H1 (cell line): ENCODE measurements at regions of chr17 and their contacts with region 1.

Region 1: DNA sequence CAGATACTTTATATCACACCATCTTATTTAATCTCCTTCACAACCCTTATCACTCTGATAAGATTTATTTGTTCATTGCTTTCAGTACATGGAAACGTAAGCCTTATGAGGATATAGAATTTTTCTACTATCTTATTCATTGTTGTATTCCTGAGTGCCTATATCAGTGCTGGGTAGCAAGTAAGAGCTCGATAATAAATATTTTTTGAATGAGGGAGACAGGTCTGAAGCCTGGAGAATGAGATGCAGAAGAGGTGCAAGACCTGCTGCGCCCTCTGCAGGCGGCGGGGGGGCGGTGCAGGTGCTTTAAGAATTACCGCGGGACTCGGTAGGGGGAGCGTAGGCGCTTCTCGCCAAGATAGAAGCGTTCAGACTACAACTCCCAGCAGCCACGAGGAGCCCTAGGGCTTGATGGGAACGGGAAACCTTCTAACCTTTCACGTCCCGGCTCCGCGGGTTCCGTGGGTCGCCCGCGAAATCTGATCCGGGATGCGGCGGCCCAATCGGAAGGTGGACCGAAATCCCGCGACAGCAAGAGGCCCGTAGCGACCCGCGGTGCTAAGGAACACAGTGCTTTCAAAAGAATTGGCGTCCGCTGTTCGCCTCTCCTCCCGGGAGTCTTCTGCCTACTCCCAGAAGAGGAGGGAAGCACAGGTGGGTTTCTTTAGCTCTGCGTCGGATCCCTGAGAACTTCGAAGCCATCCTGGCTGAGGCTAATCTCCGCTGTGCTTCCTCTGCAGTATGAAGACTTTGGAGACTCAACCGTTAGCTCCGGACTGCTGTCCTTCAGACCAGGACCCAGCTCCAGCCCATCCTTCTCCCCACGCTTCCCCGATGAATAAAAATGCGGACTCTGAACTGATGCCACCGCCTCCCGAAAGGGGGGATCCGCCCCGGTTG is at the start of gene WRAP53:
- DNase-seq: peak; percentile 95 to 99
- H3K4me3 ChIP-seq: peak within 1 kb of the TSS; percentile 75 to 100 (median 94)
- H3K27ac ChIP-seq: peak within 1 kb of the TSS; percentile 99
- H3K4me1 ChIP-seq: peaks cover 0 to 11% (median 4%) of the 10 kb centered on the region in 4 experiments; a peak in 4 of 7 replicates
- H3K27me3 ChIP-seq: no peaks in the 10 kb centered on the region
- CTCF ChIP-seq: peak; percentile 91 to 99 (median 93)
- EP300 ChIP-seq: no peak
- POLR2A ChIP-seq: peak in 1 of 2 experiments; percentile 77; a peak in 2 of 3 replicates
- RAD21 ChIP-seq: peak; percentile 83 to 85
- total RNA-seq, gene WRAP53: 29.3 and 30.1 TPM in 2 replicates

Region 2: GRCh38 chr17:7572588-7573323 is 115.4 kb before region 1 on chr17:
- CTCF ChIA-PET with region 1: no interaction called
- POLR2A ChIA-PET with region 1: interaction called, 105 read pairs
- DNase-seq: peak; percentile 100
- H3K4me3 ChIP-seq: peak overlapping the region; percentile 97 to 99 (median 98)
- H3K27ac ChIP-seq: peak overlapping the region; percentile 99
- H3K4me1 ChIP-seq: peaks cover 4 to 10% (median 7%) of the 10 kb centered on the region in 4 experiments
- H3K27me3 ChIP-seq: no peaks in the 10 kb centered on the region
- CTCF ChIP-seq: no peak
- EP300 ChIP-seq: no peak
- POLR2A ChIP-seq: peak; percentile 96 to 98
- RAD21 ChIP-seq: no peak

Region 3: DNA sequence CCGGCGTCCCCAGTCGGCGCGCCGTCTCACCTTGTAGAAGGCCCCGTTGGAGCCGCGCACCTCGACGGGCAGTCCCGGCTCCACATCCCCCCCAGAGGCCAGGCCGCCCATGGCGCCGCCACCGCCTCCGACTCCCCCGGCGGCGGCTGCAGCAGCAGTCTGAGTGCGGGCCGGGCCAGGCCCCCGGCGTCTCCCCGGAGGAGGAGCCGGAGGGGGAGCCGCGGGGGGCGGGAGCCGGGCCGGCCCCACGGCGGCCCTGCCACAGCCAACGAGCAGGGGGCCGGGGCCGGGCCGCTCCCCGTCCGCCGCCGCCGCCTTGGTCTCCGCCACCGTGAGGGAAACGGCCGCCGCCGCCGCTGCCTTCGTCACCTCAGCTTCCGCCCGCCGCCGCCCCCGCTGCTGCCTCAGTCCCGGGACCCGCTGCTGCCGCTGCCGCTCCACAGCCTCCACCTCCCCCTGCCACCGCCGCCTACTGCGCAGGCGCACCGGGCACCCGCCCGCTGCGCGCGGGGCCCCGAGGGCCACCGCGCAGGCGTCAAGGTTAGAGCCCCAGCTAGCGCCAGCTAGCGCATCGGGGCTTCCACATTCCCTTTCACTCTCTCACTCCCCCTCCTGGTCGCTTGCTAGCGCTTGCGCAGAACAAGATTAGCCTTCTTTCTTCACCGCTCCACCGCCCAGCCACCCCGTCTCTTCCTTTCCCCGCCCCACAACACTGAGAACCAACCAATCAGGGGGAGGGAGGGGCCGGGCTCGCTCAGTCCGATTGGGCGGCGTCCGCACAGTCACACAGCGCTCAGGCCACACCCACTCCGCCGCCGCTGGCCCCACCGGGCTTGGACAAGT is 73.5 kb before region 1 on chr17 and contains the start of gene FXR2:
- CTCF ChIA-PET with region 1: interaction called, 15 read pairs
- POLR2A ChIA-PET with region 1: interaction called, 2,272 read pairs
- DNase-seq: peak; percentile 97 to 100
- H3K4me3 ChIP-seq: peak within 1 kb of the TSS; percentile 87 to 95 (median 92)
- H3K27ac ChIP-seq: peak within 1 kb of the TSS; percentile 52; the same call in 1 of the 2 replicates
- H3K4me1 ChIP-seq: peaks cover 0 to 5% (median 1%) of the 10 kb centered on the region in 4 experiments; a peak in 4 of 7 replicates
- H3K27me3 ChIP-seq: no peaks in the 10 kb centered on the region
- CTCF ChIP-seq: peak; percentile 62 to 76 (median 64)
- EP300 ChIP-seq: no peak
- POLR2A ChIP-seq: peak in 1 of 2 experiments; percentile 24; a peak in 1 of 3 replicates
- RAD21 ChIP-seq: peak; percentile 14 to 29
- total RNA-seq, gene FXR2: 26.2 and 26.8 TPM in 2 replicates

Region 4: GRCh38 chr17:7650509-7651096 is 37.6 kb before region 1 on chr17 and contains the start of gene ATP1B2:
- CTCF ChIA-PET with region 1: interaction called, 34 read pairs
- POLR2A ChIA-PET with region 1: interaction called, 2,272 read pairs
- DNase-seq: peak; percentile 72 to 90
- H3K4me3 ChIP-seq: peak within 1 kb of the TSS; percentile 43 to 87 (median 63)
- H3K27ac ChIP-seq: no peak within 1 kb of the TSS
- H3K4me1 ChIP-seq: peaks cover 0 to 12% (median 8%) of the 10 kb centered on the region in 4 experiments; a peak in 5 of 7 replicates
- H3K27me3 ChIP-seq: peaks cover 0 to 13% (median 4%) of the 10 kb centered on the region in 4 experiments; a peak in 4 of 7 replicates
- CTCF ChIP-seq: no peak
- EP300 ChIP-seq: no peak
- POLR2A ChIP-seq: peak in 1 of 2 experiments; percentile 81; a peak in 2 of 3 replicates
- RAD21 ChIP-seq: no peak
- total RNA-seq, gene ATP1B2: 19.8 and 21.0 TPM in 2 replicates

Region 5: DNA sequence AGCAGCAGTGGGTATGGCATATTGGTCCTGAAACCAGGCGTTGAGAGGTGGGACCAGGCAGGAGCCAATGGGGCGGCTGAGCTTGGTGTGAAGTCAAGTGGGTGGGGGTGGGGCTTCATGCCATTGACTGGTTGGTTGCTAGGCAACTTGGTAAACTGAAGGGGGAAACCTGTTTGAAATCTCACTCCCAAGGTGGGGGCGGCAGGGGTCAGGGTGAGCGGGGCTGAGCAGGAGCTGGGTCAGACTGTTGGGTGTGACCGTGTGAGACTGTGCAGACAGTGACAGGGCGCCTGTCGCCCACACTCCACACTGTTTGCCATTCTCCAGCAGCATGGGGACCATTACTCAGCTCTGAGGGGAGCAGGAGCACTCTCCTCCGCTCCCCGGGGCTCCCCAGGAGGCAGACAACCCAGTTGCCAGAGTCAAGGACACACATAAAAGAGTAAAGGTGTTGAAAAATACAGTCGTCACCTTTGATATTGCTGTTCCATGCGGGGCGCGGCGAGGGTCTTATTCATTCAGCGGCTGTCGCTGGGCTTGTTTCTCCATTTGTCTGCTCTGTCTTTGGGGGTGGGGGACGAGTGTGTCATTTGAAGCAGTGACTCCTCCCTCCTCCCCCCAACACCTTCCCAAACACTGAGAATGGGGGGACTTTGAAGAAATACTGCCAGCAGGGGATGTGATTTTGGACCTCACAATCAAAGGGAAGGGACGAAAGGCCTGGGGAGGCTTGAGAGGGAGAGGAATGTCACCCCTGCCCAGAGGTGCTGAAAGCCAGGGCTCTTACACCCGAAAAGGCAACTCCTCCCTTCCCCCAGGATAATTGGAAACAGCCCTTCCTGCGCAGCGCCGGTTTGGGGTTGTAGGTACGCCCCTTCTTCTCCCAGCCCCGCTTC is 15.7 kb after region 1 on chr17:
- CTCF ChIA-PET with region 1: interaction called, 86 read pairs
- POLR2A ChIA-PET with region 1: interaction called, 186 read pairs
- DNase-seq: peak; percentile 61 to 77
- H3K4me3 ChIP-seq: peak overlapping the region; percentile 56 to 86 (median 66); a peak in 5 of 8 replicates
- H3K27ac ChIP-seq: peak overlapping the region; percentile 80; the same call in 1 of the 2 replicates
- H3K4me1 ChIP-seq: peaks cover 2 to 19% (median 16%) of the 10 kb centered on the region in 4 experiments
- H3K27me3 ChIP-seq: peaks cover 0 to 3% (median 1%) of the 10 kb centered on the region in 4 experiments; a peak in 2 of 7 replicates
- CTCF ChIP-seq: no peak
- EP300 ChIP-seq: peak in 1 of 2 experiments; percentile 76; a peak in 1 of 3 replicates
- POLR2A ChIP-seq: peak in 1 of 2 experiments; percentile 29; a peak in 1 of 3 replicates
- RAD21 ChIP-seq: no peak

Region 6: GRCh38 chr17:7856883-7857723 is 168.9 kb after region 1 on chr17 and contains the start of gene NAA38:
- CTCF ChIA-PET with region 1: no interaction called
- POLR2A ChIA-PET with region 1: interaction called, 11 read pairs
- DNase-seq: peak; percentile 92 to 94
- H3K4me3 ChIP-seq: peak within 1 kb of the TSS; percentile 70 to 86 (median 80)
- H3K27ac ChIP-seq: peak within 1 kb of the TSS; percentile 97
- H3K4me1 ChIP-seq: peaks cover 0 to 30% (median 26%) of the 10 kb centered on the region in 4 experiments; a peak in 6 of 7 replicates
- H3K27me3 ChIP-seq: peaks cover 30 to 49% (median 44%) of the 10 kb centered on the region in 4 experiments
- CTCF ChIP-seq: peak; percentile 31 to 54 (median 45); a peak in 3 of 4 replicates
- EP300 ChIP-seq: no peak
- POLR2A ChIP-seq: no peak; a peak in 1 of 3 replicates
- RAD21 ChIP-seq: peak; percentile 3 to 35; a peak in 2 of 4 replicates
- total RNA-seq, gene NAA38: 27.0 and 30.2 TPM in 2 replicates